Heart left ventricle (tissue), 16 donors: ENCODE measurements at regions of chr5 and their contacts with region 1.

Region 1: DNA sequence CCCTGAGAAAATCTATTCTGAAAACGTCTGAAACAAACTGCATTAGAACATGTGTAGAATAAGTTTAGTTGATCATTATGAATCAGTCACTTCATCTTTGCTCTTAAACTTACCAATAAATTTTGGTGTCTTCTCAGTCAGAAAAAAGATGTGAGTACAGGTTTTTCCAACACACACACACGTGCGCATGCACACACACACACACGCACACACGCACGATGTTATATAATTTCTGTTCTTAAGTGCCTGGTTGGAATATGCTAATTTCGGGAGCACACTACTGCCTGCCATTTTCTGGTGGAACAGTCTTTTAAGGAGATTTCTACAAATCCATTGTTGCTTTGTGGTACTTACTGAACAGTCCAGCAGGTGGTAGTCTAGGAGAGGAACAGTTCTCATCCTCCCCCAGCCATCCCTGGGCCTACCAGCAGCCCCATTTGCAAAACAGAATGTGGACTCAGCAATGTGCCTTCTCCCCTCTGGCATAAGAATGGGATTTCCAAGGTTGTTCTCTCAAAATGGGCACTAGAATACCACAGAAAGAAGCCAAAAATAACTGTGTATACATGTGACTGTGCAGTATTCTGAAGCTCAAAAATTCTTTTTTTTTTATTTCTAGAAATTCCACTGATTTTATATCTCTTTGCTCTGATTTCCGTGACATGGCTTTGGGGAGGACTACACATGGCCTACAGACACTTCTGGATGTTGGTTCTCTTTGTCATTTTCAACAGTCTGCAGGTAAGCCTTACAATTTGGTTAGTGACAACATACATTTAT is 281.3 kb downstream of the ARRDC3 start:
- DNase-seq: peak; percentile 70 to 83 (median 73)
- ATAC-seq: peak; percentile 91 to 98 (median 96)
- H3K4me3 ChIP-seq: no peak overlapping the region
- H3K27ac ChIP-seq: no peak overlapping the region
- H3K4me1 ChIP-seq: peaks cover 0 to 10% (median 0%) of the 10 kb centered on the region in 12 donors
- H3K27me3 ChIP-seq: no peaks in the 10 kb centered on the region
- CTCF ChIP-seq: peak; percentile 63 to 88 (median 78)
- POLR2A ChIP-seq: no peak

Region 2: DNA sequence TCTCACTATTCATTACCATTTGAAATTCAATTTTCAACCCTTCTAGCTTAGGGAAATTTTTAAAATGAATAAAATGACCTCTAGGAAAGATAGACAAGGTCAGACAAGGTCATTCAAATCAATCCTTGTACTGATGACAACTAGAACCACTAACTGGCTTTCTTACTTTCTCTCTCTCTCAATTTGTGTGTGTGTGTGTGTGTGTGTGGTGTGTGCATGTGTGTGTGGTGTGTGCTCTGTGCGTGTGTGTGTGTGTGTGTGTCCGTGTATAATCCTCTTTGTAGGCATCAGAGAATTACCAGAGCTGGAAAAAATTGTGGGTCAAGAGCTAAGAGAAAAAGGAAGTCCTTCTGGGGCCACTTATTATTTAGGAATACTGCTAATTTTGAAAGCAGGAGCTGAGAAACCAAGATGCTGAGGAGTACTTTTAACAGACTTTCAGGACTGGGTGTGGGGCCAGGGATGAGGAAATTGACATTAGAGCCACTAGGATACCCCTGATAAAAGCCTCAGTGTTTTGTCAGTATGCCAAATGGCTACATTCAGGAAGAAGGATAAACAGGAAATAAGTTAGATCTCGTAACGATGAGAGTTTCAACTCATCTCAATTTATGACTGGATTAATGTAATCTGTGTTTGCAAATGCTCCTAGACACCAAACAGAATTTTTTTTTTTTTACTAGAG is 1415.6 kb before region 1 on chr5:
- intact Hi-C with region 1: no loop called
- DNase-seq: no peak
- ATAC-seq: no peak
- H3K4me3 ChIP-seq: no peak overlapping the region
- H3K27ac ChIP-seq: no peak overlapping the region
- H3K4me1 ChIP-seq: no peaks in the 10 kb centered on the region
- H3K27me3 ChIP-seq: no peaks in the 10 kb centered on the region
- CTCF ChIP-seq: no peak
- POLR2A ChIP-seq: no peak

Region 3: GRCh38 chr5:90866333-90866732 is 235.5 kb before region 1 on chr5:
- intact Hi-C with region 1: loop called (anchors 5 to 10 kb)
- DNase-seq: no peak
- ATAC-seq: peak in 2 of 4 donors; percentile 61 to 62
- H3K4me3 ChIP-seq: no peak overlapping the region
- H3K27ac ChIP-seq: no peak overlapping the region
- H3K4me1 ChIP-seq: peaks cover 0 to 17% (median 1%) of the 10 kb centered on the region in 12 donors
- H3K27me3 ChIP-seq: no peaks in the 10 kb centered on the region
- CTCF ChIP-seq: peak; percentile 20 to 68 (median 55)
- POLR2A ChIP-seq: no peak

Region 4: GRCh38 chr5:90932052-90932699 is 169.6 kb before region 1 on chr5:
- intact Hi-C with region 1: loop called in 8 of 10 experiments (anchors 2 to 5 kb)
- DNase-seq: peak in 2 of 5 donors; percentile 41 to 58
- ATAC-seq: peak in 3 of 4 donors; percentile 61 to 72 (median 69)
- H3K4me3 ChIP-seq: no peak overlapping the region
- H3K27ac ChIP-seq: peak overlapping the region in 1 of 12 donors; percentile 17
- H3K4me1 ChIP-seq: peaks cover 0 to 6% (median 0%) of the 10 kb centered on the region in 12 donors
- H3K27me3 ChIP-seq: no peaks in the 10 kb centered on the region
- CTCF ChIP-seq: peak; percentile 60 to 88 (median 80)
- POLR2A ChIP-seq: no peak

Region 5: DNA sequence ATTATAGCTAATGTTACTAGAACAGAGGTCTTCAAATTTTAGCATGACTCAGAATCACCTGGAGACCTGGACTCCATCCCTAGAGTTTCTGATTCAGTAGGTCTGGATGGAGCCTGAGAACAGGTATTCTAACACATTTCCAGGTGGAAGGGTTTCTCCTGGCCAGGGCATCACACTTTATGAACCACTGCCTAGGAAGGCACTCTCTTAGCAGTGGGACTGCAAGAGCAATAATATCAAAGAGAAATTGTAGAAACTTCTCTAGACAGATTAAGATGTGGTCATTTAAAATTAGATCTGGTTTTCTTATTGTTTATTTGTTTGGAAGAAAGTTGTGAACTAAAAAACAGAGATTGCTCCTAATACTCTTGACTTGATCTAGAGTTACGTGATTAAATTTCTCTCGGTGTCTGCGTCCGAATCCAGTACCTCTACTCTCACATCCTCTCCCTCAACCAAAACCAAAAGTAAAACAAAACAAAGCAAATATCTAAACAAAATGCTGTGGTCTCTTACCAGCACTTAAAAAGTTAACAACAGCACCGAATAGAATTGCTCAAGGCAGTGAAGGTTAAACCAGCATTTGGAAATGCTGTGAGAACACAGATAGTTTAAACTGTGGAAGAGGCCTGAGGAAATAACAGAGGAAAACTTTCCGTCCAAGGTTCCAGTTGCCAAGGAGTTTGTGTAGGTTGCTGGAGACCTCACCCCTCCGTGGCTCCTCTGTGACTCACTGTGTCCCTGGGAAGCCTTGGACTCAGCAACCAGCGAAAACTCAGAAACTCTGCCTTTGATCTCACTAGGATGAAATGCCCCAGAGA is 87.9 kb after region 1 on chr5:
- intact Hi-C with region 1: no loop called
- DNase-seq: peak in 4 of 5 donors; percentile 31 to 53 (median 46)
- ATAC-seq: peak in 3 of 4 donors; percentile 87 to 93 (median 92)
- H3K4me3 ChIP-seq: peak overlapping the region in 9 of 12 donors; percentile 7 to 49 (median 31)
- H3K27ac ChIP-seq: peak overlapping the region in 11 of 12 donors; percentile 1 to 77 (median 56)
- H3K4me1 ChIP-seq: peaks cover 0 to 18% (median 0%) of the 10 kb centered on the region in 12 donors
- H3K27me3 ChIP-seq: no peaks in the 10 kb centered on the region
- CTCF ChIP-seq: no peak
- POLR2A ChIP-seq: no peak

Region 6: GRCh38 chr5:91219803-91220371 is 118.1 kb after region 1 on chr5:
- intact Hi-C with region 1: loop called in 8 of 10 experiments (anchors 5 to 10 kb)
- DNase-seq: peak in 1 of 5 donors; percentile 26
- ATAC-seq: peak in 2 of 4 donors; percentile 41 to 52
- H3K4me3 ChIP-seq: no peak overlapping the region
- H3K27ac ChIP-seq: peak overlapping the region in 4 of 12 donors; percentile 6 to 92 (median 35)
- H3K4me1 ChIP-seq: peaks cover 0 to 16% (median 0%) of the 10 kb centered on the region in 12 donors
- H3K27me3 ChIP-seq: no peaks in the 10 kb centered on the region
- CTCF ChIP-seq: peak in 10 of 12 donors; percentile 18 to 54 (median 33)
- POLR2A ChIP-seq: no peak

Region 7: DNA sequence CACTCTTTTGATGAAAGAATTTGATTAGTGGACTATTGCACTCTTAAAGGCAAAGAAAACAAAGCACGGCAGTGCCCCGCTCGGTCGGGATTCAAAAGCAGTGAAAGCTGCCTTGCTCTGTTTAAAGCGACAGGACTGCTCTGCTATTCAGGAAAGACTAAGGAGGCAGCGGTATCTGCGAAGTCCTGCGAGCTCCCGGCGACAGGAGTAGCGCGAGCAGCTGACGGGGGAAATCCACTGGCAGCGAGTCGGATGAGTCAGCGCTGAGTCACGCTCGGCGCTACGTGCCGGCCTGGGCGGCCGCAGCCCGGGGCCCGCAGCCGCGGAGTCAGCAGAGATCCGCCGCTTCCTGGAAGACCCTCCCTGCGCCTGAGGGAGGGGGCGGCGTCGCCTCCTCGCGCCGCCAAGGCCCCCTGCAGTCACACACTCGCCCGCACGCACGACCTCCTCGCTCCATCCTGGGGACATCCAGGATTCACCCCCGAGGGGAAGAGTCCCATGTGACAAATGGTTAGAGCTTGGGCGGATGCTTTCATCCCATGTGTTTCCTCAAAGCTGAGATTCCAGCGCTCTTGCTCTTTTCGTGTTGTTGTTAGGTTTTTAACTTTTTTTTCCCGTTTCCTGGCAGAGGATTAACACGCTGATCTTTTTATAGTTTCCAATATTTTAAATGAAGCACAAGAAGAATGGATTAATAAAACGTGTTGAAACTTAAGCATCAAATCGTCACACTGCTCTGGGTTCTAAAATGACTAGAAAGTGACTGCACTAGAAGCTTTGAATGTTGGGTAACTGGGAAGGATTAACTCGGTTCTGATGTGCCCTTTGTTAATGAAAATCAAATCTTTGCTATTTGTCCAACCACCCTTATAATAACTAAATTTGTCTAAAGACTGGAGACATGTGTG is 178.8 kb after region 1 on chr5:
- intact Hi-C with region 1: loop called in 7 of 10 experiments (anchors 5 to 10 kb)
- DNase-seq: peak; percentile 94 to 97 (median 95)
- ATAC-seq: peak; percentile 95 to 98 (median 97)
- H3K4me3 ChIP-seq: peak overlapping the region; percentile 35 to 73 (median 62)
- H3K27ac ChIP-seq: peak overlapping the region; percentile 72 to 97 (median 93)
- H3K4me1 ChIP-seq: peaks cover 0 to 29% (median 8%) of the 10 kb centered on the region in 12 donors
- H3K27me3 ChIP-seq: no peaks in the 10 kb centered on the region
- CTCF ChIP-seq: peak in 2 of 12 donors; percentile 6 to 7
- POLR2A ChIP-seq: peak in 1 of 2 donors; percentile 50

Region 8: DNA sequence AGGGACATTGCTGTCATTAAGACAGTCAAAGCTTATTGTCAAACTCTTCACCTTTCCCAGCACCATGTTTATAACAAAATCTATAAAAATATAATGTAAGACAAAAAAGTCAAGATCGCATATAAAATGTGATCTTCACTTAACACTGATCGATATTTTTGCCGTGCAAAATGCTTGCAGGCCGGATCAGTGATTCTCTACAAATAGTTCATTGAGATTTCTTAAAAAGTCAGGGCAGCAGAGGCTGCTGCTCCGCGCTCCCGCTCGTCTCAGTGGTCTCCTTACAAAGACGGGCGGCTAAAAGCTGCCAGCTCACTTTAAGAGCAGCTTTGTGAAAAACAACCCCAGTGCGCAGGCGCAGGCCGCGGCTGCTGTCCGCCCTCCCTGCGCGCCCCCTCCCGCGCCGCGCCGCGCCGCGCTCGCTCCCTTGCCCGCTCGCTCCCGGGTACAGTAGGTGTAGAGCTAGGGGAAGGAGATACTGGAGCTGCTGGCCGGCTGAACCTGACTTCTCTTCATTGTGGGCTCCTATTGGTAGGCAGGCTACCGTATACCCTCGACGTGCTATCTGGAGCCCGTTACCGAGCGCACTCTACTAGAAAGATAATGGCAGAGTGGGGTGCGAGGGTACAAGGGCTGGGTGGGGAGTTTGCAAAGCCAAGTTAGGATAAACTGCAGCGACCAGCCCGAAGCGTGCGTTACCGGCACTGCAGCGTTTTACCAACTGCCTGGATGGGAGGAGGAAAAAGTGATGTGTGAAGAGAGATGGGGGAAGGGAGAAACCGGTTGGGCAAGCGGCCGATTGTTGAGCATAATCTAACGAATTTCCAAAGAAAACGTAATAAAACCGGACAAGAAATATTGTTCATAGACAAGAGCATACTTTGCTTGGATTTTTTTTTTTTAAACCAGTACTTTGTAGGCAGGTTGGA is 281.5 kb after region 1 on chr5 and contains the start of gene ARRDC3:
- intact Hi-C with region 1: loop called (anchors 1 to 2 kb)
- DNase-seq: peak; percentile 97 to 98 (median 97)
- ATAC-seq: peak; percentile 67 to 86 (median 76)
- H3K4me3 ChIP-seq: peak within 1 kb of the TSS; percentile 60 to 83 (median 75)
- H3K27ac ChIP-seq: peak within 1 kb of the TSS; percentile 90 to 100 (median 98)
- H3K4me1 ChIP-seq: peaks cover 0 to 26% (median 14%) of the 10 kb centered on the region in 12 donors
- H3K27me3 ChIP-seq: no peaks in the 10 kb centered on the region
- CTCF ChIP-seq: peak in 1 of 12 donors; percentile 14
- POLR2A ChIP-seq: peak; percentile 64 to 97
- total RNA-seq, gene ARRDC3: 4.3 to 53.6 (median 11.8) TPM